Cardiac septum (tissue), 1 donor: ENCODE measurements at regions of chr12 and their contacts with region 1.

Region 1: DNA sequence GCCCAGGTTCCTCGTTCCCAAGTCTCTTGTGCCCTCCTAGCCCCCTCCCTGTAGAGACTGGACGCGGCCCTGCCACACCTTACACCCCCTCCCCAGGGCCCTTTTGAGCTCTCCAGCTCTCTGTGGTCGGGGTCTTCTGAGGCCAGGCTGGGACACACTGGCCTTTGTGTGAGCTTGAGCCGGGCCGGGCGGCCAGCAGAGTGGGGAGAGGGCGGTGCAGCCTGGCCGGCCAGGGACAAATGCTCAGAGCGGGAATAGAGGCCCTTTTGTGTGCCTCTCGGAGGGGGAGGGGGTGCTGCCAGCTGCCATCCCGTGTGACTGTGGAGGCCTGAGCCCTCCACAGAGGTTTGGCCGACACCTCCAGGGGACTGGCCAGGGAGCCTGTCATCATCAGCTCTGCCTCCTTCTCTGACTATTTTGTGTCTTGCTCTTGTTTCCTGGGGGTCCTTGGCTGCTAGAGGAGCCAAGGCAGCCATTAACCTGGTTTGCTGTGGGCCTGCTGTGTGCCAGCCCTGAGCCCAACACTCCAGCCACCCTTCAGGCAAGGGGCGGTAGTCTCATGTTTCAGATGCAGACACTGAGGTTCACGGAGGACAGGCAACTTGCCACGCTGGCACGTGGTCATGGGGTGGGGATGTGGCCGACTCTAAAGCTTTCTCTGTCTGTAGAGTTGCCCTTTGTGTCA is 13.6 kb downstream of the FAM222A start:
- DNase-seq: peak; percentile 69

Region 2: DNA sequence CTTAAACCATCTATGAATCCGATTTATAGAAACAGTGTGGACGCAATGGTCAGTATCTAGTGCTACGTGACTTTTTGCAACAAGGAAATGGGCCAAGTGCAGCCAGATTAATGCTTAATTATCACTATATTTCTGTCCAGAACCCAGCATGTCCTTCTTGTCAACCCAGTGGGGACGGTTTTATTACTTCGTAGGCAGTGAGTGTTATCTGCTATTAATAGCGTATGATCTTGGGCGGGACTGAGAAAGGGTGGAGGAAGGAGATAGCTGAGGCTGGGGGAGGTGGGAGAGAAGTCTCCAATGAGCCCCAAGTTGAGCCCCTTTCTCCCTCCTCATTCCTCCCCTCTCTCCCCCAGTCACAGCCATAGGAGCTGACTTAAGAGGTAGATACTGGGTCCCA is 73.3 kb before region 1 on chr12:
- intact Hi-C with region 1: no loop called
- DNase-seq: no peak

Region 3: GRCh38 chr12:109763201-109763841 is 36.1 kb after region 1 on chr12:
- intact Hi-C with region 1: loop called (anchors 5 kb)
- DNase-seq: no peak